ENCODE measurements at regions of chr6 and their contacts with region 1.

Region 1: DNA sequence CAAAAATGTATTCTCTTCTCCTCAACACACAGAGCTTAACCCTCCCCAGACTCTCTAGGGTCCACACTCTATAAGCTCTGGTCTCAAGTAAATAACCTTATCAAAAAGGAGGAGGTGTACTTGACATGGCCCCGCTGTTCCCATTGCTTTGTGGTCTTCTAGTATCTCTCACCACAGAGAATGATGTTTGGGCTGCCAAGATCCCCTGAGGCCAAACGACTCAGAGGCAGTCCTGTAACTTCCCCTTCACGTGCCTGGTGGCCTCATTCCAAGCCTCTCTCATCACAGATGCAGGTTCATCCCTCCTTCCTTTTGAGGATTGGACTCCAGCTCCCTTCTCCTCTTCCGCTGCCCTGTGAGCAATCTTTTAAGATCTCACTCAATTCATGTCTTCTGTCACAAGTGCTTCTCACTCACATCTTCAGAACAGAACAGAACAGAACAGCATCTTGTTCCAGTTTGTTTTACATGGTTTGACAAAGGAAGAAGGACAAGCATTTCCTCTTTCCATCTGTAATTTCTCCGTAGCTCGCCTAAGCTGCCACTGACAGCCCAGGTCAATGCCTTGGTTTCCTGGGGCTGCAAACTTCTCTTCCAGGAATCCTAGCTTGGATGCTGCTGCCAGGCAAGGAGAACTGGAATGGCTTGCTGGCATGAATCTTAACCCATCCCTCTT is 541.5 kb downstream of the CD83 start:
- DNase-seq: no peak
- H3K4me3 Mint-ChIP-seq: no peak overlapping the region
- H3K27ac Mint-ChIP-seq: no peak overlapping the region
- H3K4me1 Mint-ChIP-seq: peaks cover 29% of the 10 kb centered on the region
- H3K27me3 Mint-ChIP-seq: peaks cover 2% of the 10 kb centered on the region

Region 2: GRCh38 chr6:14635934-14636591 is 23.0 kb before region 1 on chr6:
- CTCF ChIA-PET with region 1: interaction called, 12 read pairs
- POLR2A ChIA-PET with region 1: interaction called, 5 read pairs
- DNase-seq: peak; percentile 65
- H3K4me3 Mint-ChIP-seq: peak overlapping the region; percentile 69
- H3K27ac Mint-ChIP-seq: peak overlapping the region; percentile 94
- H3K4me1 Mint-ChIP-seq: peaks cover 72% of the 10 kb centered on the region
- H3K27me3 Mint-ChIP-seq: no peaks in the 10 kb centered on the region

Region 3: DNA sequence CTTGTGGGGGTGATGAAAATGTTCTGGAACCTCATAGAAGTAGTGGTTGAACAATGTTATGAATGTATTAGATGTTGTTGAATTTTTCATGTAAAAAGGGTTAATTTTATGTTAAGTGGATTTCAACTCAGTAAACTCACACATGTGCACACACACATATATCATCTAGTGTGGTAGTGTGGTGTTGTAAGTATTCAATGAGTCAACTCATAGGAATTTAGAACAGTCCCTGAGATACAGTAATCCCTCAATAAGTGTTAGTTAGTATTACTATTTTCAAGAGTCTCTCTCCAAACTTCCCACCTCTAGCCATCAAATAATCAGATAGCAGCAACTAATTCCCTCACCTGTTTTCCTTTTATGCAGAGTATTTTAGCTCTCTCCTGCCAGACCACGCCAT is 23.8 kb after region 1 on chr6:
- CTCF ChIA-PET with region 1: no interaction called
- POLR2A ChIA-PET with region 1: no interaction called
- DNase-seq: no peak
- H3K4me3 Mint-ChIP-seq: no peak overlapping the region
- H3K27ac Mint-ChIP-seq: no peak overlapping the region
- H3K4me1 Mint-ChIP-seq: no peaks in the 10 kb centered on the region
- H3K27me3 Mint-ChIP-seq: no peaks in the 10 kb centered on the region

Region 4: GRCh38 chr6:14758421-14759081 is 99.5 kb after region 1 on chr6:
- CTCF ChIA-PET with region 1: no interaction called
- POLR2A ChIA-PET with region 1: no interaction called
- DNase-seq: no peak
- H3K4me3 Mint-ChIP-seq: no peak overlapping the region
- H3K27ac Mint-ChIP-seq: no peak overlapping the region
- H3K4me1 Mint-ChIP-seq: peaks cover 22% of the 10 kb centered on the region
- H3K27me3 Mint-ChIP-seq: no peaks in the 10 kb centered on the region

Region 5: GRCh38 chr6:15400572-15401004 is 741.6 kb after region 1 on chr6:
- CTCF ChIA-PET with region 1: no interaction called
- POLR2A ChIA-PET with region 1: no interaction called
- DNase-seq: peak; percentile 58
- H3K4me3 Mint-ChIP-seq: peak overlapping the region; percentile 75
- H3K27ac Mint-ChIP-seq: peak overlapping the region; percentile 89
- H3K4me1 Mint-ChIP-seq: peaks cover 78% of the 10 kb centered on the region
- H3K27me3 Mint-ChIP-seq: no peaks in the 10 kb centered on the region